ENCODE measurements at regions of chr3 and their contacts with region 1.

Region 1: GRCh38 chr3:127697551-127698240 is 24.9 kb downstream of the ABTB1 start:
- DNase-seq: peak; percentile 85
- ATAC-seq: peak; percentile 74 to 79

Region 2: DNA sequence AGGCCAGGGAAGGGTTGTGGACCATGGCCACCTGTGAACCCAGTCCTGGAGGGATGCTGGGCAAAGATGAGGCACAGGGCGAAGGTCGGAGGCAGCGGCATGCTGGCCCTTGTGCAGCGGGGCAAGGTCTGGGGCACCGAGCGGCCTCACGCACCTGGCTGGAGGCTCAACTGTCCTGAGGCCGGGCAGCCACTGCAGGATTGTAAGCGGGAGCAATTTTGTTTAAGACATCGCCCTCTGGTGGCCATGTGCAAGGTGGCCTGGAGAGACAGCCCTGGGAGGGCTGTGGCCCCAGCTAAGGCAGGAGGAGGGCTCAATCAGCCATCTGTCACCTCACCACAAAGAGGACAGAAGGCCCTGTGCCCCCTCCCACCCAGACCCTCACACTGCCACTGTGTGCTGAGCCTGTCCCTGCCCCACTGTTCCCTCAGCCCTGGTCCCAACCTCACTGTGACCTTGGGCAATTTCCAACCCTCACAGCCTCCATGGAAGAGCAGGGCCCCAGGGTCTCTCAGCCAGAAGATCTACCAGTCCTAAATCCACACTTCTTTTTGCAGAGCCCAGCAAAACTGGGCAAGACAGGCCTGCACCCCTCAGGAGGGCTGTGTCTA is 153.4 kb before region 1 on chr3:
- intact Hi-C with region 1: no loop called
- DNase-seq: peak; percentile 80
- ATAC-seq: peak in 1 of 2 donors; percentile 48

Region 3: DNA sequence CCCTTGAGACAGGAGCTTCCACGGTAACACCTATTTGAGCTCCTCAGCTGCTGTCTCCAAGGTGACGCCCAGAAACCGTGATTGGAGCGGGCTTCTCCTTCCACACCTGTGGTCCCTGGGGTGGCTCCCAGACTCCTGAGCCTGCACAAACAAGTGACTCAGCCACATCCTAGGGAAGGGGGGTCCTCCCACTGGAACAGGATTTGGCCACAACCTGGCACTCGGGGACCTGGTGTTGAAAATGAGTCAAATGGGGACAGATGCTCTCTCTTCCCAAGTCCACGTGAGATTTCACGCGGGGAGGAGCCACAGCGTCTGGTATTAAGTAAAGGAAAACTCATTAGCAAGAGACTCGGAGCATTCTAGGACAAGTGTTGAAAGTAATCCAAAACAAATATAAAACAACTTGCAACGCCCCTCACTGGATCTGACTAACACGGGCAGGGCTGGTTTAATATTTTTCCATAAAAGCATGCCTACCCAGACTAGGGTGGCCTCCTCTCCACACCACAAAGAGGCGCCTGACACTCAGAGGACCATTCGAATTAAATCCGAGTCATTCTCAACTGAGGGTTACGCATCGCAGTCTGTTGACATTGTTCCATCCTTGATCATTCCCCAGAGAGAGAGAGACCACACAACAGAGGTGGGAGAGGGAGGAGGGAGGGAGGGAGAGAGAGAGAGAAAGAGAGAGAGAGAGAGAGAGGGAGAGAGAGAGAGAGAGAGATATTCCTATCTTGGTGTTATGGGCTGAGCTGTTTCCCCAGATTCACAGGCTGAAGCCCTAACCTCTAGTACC is 50.2 kb after region 1 on chr3:
- intact Hi-C with region 1: loop called in 1 of 2 experiments (anchors 5 kb)
- DNase-seq: peak; percentile 84
- ATAC-seq: peak; percentile 58 to 88

Region 4: GRCh38 chr3:127822698-127823425 is 125.2 kb after region 1 on chr3:
- intact Hi-C with region 1: loop called (anchors 2 to 10 kb)
- DNase-seq: peak; percentile 75
- ATAC-seq: peak; percentile 74 to 92

Measured in left cardiac atrium (tissue), 4 donors.